Thyroid gland (tissue), 4 donors: ENCODE measurements at regions of chr12 and their contacts with region 1.

Region 1: DNA sequence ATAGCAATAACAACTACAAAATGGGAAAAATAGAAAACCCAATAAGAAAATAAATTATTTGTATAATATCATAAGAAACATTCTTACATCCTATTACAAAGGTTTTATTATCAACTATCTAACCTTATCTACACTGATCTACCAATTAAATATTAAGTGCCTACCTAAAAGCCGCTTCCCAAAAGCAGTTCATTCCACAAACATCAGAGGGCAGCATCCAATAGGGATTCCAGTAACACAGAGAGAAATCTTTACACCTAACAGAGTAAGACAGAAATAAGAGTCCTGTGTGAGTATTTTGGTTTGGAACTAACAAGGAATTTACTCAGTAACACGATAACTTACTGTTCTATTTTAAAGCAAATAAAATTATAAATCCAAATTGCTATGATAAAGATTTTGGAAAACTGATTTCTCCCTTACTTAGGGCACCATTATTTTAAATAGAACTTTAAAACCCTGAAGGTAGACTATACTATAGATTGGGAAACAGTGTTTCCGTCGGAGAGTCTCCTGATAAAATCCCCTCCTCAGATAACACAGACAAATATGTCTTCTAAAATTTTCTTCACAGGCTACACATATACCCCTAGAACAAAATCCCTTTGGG is 15.0 kb downstream of the GXYLT1 start:
- DNase-seq: peak; percentile 42 to 48
- H3K4me3 ChIP-seq: no peak overlapping the region
- H3K27ac ChIP-seq: no peak overlapping the region
- H3K4me1 ChIP-seq: peaks cover 3 to 16% of the 10 kb centered on the region in 2 donors
- H3K27me3 ChIP-seq: no peaks in the 10 kb centered on the region
- CTCF ChIP-seq: peak; percentile 61 to 93 (median 87)
- POLR2A ChIP-seq: no peak

Region 2: GRCh38 chr12:41739066-41739465 is 390.6 kb before region 1 on chr12:
- intact Hi-C with region 1: no loop called
- DNase-seq: no peak
- H3K4me3 ChIP-seq: no peak overlapping the region
- H3K27ac ChIP-seq: no peak overlapping the region
- H3K4me1 ChIP-seq: no peaks in the 10 kb centered on the region
- H3K27me3 ChIP-seq: no peaks in the 10 kb centered on the region
- CTCF ChIP-seq: no peak
- POLR2A ChIP-seq: no peak

Region 3: GRCh38 chr12:41903014-41903708 is 226.5 kb before region 1 on chr12:
- intact Hi-C with region 1: no loop called
- DNase-seq: no peak
- H3K4me3 ChIP-seq: no peak overlapping the region
- H3K27ac ChIP-seq: no peak overlapping the region
- H3K4me1 ChIP-seq: no peaks in the 10 kb centered on the region
- H3K27me3 ChIP-seq: no peaks in the 10 kb centered on the region
- CTCF ChIP-seq: no peak
- POLR2A ChIP-seq: no peak

Region 4: GRCh38 chr12:42332301-42333285 is 202.9 kb after region 1 on chr12:
- intact Hi-C with region 1: loop called (anchors 5 kb)
- DNase-seq: peak; percentile 14 to 19
- H3K4me3 ChIP-seq: no peak overlapping the region
- H3K27ac ChIP-seq: no peak overlapping the region
- H3K4me1 ChIP-seq: peaks cover 5% of the 10 kb centered on the region in 2 donors
- H3K27me3 ChIP-seq: no peaks in the 10 kb centered on the region
- CTCF ChIP-seq: peak; percentile 39 to 80 (median 66)
- POLR2A ChIP-seq: no peak